Body of pancreas (tissue), 4 donors: ENCODE measurements at regions of chr1 and their contacts with region 1.

Region 1: GRCh38 chr1:1291548-1292441 is 11.6 kb downstream of the SCNN1D start:
- DNase-seq: peak; percentile 85 to 91 (median 88)
- ATAC-seq: peak; percentile 81
- H3K4me3 ChIP-seq: no peak overlapping the region
- H3K27ac ChIP-seq: no peak overlapping the region
- H3K4me1 ChIP-seq: peaks cover 11% of the 10 kb centered on the region
- H3K27me3 ChIP-seq: no peaks in the 10 kb centered on the region
- CTCF ChIP-seq: peak; percentile 61 to 89 (median 79)
- POLR2A ChIP-seq: peak in 1 of 3 donors; percentile 13

Region 2: GRCh38 chr1:844472-845026 is 447.2 kb before region 1 on chr1:
- intact Hi-C with region 1: no loop called
- DNase-seq: no peak
- ATAC-seq: no peak
- H3K4me3 ChIP-seq: no peak overlapping the region
- H3K27ac ChIP-seq: no peak overlapping the region
- H3K4me1 ChIP-seq: no peaks in the 10 kb centered on the region
- H3K27me3 ChIP-seq: no peaks in the 10 kb centered on the region
- CTCF ChIP-seq: no peak
- POLR2A ChIP-seq: no peak

Region 3: DNA sequence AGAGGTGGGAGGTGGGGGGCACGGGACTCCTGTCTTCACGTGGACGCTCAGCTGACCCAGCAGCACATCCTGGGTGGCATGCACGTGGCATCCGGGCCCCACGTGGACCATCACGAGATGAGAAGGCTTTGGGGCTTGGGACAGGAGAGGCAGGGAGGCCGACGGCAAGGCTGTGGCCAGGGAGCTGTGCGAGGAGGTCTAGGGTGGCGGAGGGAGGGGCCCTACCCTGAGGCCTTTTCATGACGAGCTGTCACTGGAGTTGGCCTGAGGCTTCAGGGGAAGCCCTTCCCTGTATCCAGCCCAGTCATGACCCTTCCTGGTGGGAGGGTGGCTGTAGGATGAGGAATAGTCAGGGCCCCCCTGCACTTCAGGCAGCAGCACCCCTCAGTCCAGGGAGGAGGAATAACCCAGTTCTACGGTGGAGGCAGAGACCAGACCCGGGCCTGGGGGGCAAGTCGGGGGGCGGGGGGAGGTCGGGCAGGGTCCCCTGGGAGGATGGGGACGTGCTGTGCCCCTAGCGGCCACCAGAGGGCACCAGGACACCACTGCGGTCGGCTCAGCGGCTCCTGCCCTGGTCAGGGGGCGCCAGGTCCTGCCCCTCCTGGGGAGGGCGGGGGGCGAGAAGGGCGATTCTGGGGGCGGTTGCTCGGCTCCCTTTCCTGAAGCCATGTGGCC is 307.9 kb before region 1 on chr1:
- intact Hi-C with region 1: loop called (anchors 10 kb)
- DNase-seq: peak in 3 of 4 donors; percentile 50 to 65 (median 63)
- ATAC-seq: peak; percentile 76
- H3K4me3 ChIP-seq: no peak overlapping the region
- H3K27ac ChIP-seq: no peak overlapping the region
- H3K4me1 ChIP-seq: peaks cover 3% of the 10 kb centered on the region
- H3K27me3 ChIP-seq: peaks cover 0 to 4% of the 10 kb centered on the region in 2 donors
- CTCF ChIP-seq: peak; percentile 54 to 98 (median 69)
- POLR2A ChIP-seq: no peak

Region 4: GRCh38 chr1:1033009-1033587 is 258.7 kb before region 1 on chr1:
- intact Hi-C with region 1: loop called (anchors 10 kb)
- DNase-seq: peak; percentile 89 to 94 (median 92)
- ATAC-seq: peak; percentile 91
- H3K4me3 ChIP-seq: no peak overlapping the region
- H3K27ac ChIP-seq: peak overlapping the region in 2 of 4 donors; percentile 23 to 38
- H3K4me1 ChIP-seq: peaks cover 39% of the 10 kb centered on the region
- H3K27me3 ChIP-seq: no peaks in the 10 kb centered on the region
- CTCF ChIP-seq: peak; percentile 44 to 90 (median 75)
- POLR2A ChIP-seq: no peak

Region 5: DNA sequence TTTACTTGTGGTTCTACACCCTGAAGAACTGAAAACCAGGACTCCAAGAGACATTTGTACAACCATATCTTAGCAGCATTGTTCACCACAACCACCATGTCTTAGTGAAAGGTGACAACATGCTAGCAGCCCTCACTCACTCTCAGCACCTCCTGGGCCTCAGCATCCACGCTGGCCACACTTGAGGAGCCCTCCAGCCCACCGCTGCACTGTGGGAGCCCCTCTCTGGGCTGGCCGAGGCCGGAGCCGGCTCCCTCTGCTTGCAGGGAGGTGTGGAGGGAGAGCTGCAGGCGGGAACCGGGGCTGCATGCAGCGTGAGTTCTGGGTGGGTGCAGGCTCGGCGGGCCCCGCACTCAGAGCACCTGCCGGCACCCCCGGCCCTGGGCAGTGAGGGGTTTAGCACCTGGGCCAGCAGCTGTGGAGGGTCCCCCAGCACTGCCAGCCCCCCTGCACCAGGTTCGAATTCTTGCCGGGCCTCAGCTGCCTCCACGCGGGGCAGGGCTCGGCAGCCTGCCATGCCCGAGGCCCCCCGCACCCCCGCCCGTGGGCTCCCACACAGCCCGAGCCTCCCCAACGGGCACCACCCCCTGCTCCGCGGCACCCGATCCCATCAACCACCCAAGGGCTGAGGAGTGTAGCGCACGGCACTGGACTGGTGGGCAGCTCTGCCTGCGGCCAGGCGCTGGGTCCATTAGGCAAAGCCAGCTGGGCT is 185.1 kb before region 1 on chr1:
- intact Hi-C with region 1: no loop called
- DNase-seq: no peak
- ATAC-seq: no peak
- H3K4me3 ChIP-seq: no peak overlapping the region
- H3K27ac ChIP-seq: no peak overlapping the region
- H3K4me1 ChIP-seq: no peaks in the 10 kb centered on the region
- H3K27me3 ChIP-seq: no peaks in the 10 kb centered on the region
- CTCF ChIP-seq: no peak
- POLR2A ChIP-seq: no peak

Region 6: DNA sequence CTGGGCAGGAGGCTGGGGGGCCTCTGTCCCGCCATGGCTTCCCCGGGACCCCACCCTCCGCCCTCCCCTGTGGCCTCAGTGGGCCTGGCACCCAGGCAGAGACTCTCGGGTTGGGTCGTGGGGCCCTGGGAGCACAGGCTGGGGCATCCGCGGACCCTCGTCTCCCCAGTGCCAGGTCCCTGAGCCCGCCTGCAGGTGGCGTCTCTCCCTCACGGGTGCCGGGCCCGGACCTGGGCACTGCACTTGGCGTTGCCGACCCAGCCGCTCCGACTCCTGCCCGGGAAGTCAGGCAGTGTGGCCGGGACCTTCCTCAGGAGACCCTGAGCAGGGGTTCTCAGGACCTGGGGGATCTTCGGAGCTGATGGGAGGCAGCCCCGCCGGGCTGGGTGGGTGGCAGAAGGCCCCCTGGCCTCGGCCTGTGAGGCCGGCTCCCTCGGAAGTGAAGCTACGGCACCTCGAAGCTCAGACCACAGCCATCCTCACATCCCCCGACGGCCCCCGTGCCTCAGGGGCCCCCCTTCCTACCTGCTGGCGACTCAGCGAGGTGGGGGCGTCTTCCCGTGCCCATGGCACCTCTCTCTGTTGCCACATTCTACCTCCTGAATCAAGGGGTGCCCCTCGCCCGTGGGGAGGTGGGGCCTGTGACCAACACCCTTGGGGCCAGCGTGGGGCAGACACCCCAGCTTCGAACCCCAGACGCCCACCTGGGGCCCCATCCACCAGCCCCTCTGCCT is 169.6 kb before region 1 on chr1:
- intact Hi-C with region 1: loop called (anchors 5 kb)
- DNase-seq: peak; percentile 82 to 87 (median 86)
- ATAC-seq: peak; percentile 93
- H3K4me3 ChIP-seq: no peak overlapping the region
- H3K27ac ChIP-seq: no peak overlapping the region
- H3K4me1 ChIP-seq: peaks cover 27% of the 10 kb centered on the region
- H3K27me3 ChIP-seq: no peaks in the 10 kb centered on the region
- CTCF ChIP-seq: peak; percentile 84 to 96 (median 92)
- POLR2A ChIP-seq: no peak

Region 7: GRCh38 chr1:2429780-2430591 is 1138.2 kb after region 1 on chr1:
- intact Hi-C with region 1: no loop called
- DNase-seq: no peak
- ATAC-seq: no peak
- H3K4me3 ChIP-seq: no peak overlapping the region
- H3K27ac ChIP-seq: no peak overlapping the region
- H3K4me1 ChIP-seq: no peaks in the 10 kb centered on the region
- H3K27me3 ChIP-seq: no peaks in the 10 kb centered on the region
- CTCF ChIP-seq: no peak
- POLR2A ChIP-seq: no peak